Breast epithelium (tissue), 4 donors: ENCODE measurements at regions of chr16 and their contacts with region 1.

Region 1: GRCh38 chr16:63067141-63067540 is 1030.9 kb upstream of the CDH8 start:
- DNase-seq: no peak
- H3K4me3 ChIP-seq: no peak overlapping the region
- H3K27ac ChIP-seq: no peak overlapping the region
- H3K4me1 ChIP-seq: no peaks in the 10 kb centered on the region
- H3K27me3 ChIP-seq: no peaks in the 10 kb centered on the region
- CTCF ChIP-seq: no peak
- POLR2A ChIP-seq: no peak

Region 2: GRCh38 chr16:63080746-63081145 is 13.6 kb after region 1 on chr16:
- intact Hi-C with region 1: loop called (anchors 2 kb)
- DNase-seq: no peak
- H3K4me3 ChIP-seq: no peak overlapping the region
- H3K27ac ChIP-seq: no peak overlapping the region
- H3K4me1 ChIP-seq: no peaks in the 10 kb centered on the region
- H3K27me3 ChIP-seq: no peaks in the 10 kb centered on the region
- CTCF ChIP-seq: no peak
- POLR2A ChIP-seq: no peak